IMR-90 (cell line): ENCODE measurements at regions of chrX and their contacts with region 1.

Region 1: GRCh38 chrX:120000490-120001246 is 57.1 kb upstream of the NKAP start:
- DNase-seq: peak; percentile 1
- ATAC-seq: no peak
- H3K4me3 ChIP-seq: no peak overlapping the region
- H3K27ac ChIP-seq: no peak overlapping the region
- H3K4me1 ChIP-seq: no peaks in the 10 kb centered on the region
- H3K27me3 ChIP-seq: peaks cover 37% of the 10 kb centered on the region
- CTCF ChIP-seq: no peak
- POLR2A ChIP-seq: no peak
- RAD21 ChIP-seq: no peak

Region 2: GRCh38 chrX:119729408-119730201 is 271.1 kb before region 1 on chrX:
- CTCF ChIA-PET with region 1: no interaction called
- POLR2A ChIA-PET with region 1: no interaction called
- dilution Hi-C with region 1: no loop called
- in situ Hi-C with region 1: no loop called
- intact Hi-C with region 1: no loop called
- DNase-seq: peak; percentile 64
- ATAC-seq: peak; percentile 70
- H3K4me3 ChIP-seq: no peak overlapping the region
- H3K27ac ChIP-seq: no peak overlapping the region
- H3K4me1 ChIP-seq: no peaks in the 10 kb centered on the region; the same call in 1 of the 2 replicates
- H3K27me3 ChIP-seq: no peaks in the 10 kb centered on the region; the same call in 1 of the 2 replicates
- CTCF ChIP-seq: peak; percentile 65
- POLR2A ChIP-seq: no peak
- RAD21 ChIP-seq: peak; percentile 72

Region 3: GRCh38 chrX:120664081-120664480 is 663.4 kb after region 1 on chrX:
- CTCF ChIA-PET with region 1: no interaction called
- POLR2A ChIA-PET with region 1: no interaction called
- dilution Hi-C with region 1: no loop called
- in situ Hi-C with region 1: no loop called
- intact Hi-C with region 1: loop called (anchors 5 kb)
- DNase-seq: peak; percentile 13
- ATAC-seq: no peak
- H3K4me3 ChIP-seq: no peak overlapping the region
- H3K27ac ChIP-seq: no peak overlapping the region
- H3K4me1 ChIP-seq: no peaks in the 10 kb centered on the region
- H3K27me3 ChIP-seq: no peaks in the 10 kb centered on the region
- CTCF ChIP-seq: peak; percentile 40
- POLR2A ChIP-seq: no peak
- RAD21 ChIP-seq: 0 out of 2 replicates have a peak, but pooled peaks have one; percentile 21